AG04450 (cell line): ENCODE measurements at regions of chr22 and their contacts with region 1.

Region 1: GRCh38 chr22:28885939-28886338 is 2.6 kb downstream of the ZNRF3 start:
- DNase-seq: no peak
- H3K4me3 ChIP-seq: no peak overlapping the region
- H3K27ac ChIP-seq: no peak overlapping the region
- H3K27me3 ChIP-seq: no peaks in the 10 kb centered on the region
- CTCF ChIP-seq: no peak

Region 2: DNA sequence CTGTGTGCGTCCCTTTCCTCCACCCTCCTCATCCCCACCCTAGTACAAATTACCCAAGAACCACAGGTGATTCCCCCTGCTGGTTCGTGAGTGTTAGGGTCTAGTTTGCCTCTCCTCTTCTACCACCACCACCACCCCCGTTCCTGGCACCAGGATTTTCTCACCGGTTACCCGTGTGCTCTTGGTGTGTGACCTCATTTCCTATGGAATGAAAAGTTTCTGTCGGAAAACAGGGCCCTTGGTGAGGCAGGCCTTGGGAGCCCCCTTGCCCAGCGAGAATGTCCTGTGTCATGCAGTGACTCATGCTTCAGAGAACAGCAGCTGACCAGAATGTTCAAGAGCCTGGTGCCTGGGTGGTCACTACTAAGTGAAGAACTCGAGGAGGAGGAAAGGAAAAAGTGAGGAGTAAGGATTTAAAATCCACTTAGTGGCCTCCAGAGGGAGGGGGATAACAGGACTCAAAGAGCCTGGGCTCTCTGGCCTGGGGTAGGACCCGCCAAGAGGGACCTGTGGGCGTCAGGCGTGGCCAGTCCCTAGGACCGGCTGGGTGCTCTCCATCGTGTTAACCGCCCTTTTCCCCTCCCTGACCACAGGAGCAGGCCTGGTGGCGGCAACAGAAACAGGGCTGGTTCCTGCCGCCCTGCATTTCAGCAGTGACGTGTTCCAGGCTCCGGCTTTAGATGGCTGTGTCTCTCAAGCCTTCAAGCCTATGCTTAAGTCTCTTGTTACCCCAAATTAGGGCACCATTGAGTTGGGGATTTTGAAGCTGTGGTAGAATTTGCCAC is 145.5 kb after region 1 on chr22:
- CTCF ChIA-PET with region 1: no interaction called
- POLR2A ChIA-PET with region 1: interaction called, 16 read pairs
- DNase-seq: peak; percentile 79
- H3K4me3 ChIP-seq: peak overlapping the region; percentile 1; the same call in 1 of the 2 replicates
- H3K27ac ChIP-seq: peak overlapping the region; percentile 98
- H3K27me3 ChIP-seq: no peaks in the 10 kb centered on the region
- CTCF ChIP-seq: peak; percentile 26; the same call in 1 of the 2 replicates